B cell (primary cell): ENCODE measurements at regions of chr2 and their contacts with region 1.

Region 1: DNA sequence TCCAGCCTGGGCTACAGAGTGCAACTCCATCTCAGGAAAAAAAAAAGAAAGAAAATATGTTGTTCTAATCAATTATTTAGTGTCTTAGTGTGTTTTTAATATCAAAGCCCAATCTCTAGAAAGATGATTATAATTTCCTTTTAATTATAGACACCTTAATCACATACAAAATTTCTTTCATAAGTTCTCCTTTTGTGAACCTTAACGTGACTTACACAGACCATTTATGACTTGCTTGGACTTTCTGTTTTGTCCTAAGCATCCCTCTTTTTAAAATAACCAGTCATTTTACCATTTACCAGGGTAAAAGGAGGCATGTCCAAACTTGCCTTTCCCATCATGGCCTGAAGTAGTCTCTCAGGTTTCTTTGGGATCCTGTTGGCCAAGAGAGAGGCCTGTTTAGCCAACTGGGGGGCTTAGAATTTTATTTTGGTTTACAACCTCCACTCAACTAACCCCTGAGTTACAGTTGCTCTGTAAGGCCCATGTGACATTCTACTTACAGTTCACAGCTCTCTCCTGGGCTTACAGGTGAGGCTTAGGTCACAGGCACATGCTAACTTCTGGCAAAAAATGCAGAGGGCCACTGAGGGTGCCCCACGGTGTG is 23.9 kb upstream of the GPR155 start:
- DNase-seq: no peak
- ATAC-seq: no peak
- H3K4me3 ChIP-seq: no peak overlapping the region
- H3K4me3 Mint-ChIP-seq: no peak overlapping the region
- H3K27ac ChIP-seq: no peak overlapping the region
- H3K27ac Mint-ChIP-seq: no peak overlapping the region
- H3K4me1 ChIP-seq: no peaks in the 10 kb centered on the region
- H3K4me1 Mint-ChIP-seq: no peaks in the 10 kb centered on the region
- H3K27me3 ChIP-seq: no peaks in the 10 kb centered on the region
- H3K27me3 Mint-ChIP-seq: no peaks in the 10 kb centered on the region
- CTCF ChIP-seq: no peak

Region 2: GRCh38 chr2:174522553-174522952 is 11.9 kb after region 1 on chr2:
- CTCF ChIA-PET with region 1: interaction called, 4 read pairs
- POLR2A ChIA-PET with region 1: interaction called, 6 read pairs
- intact Hi-C with region 1: loop called (anchors 2 kb)
- DNase-seq: peak; percentile 31
- ATAC-seq: peak; percentile 36
- H3K4me3 ChIP-seq: no peak overlapping the region
- H3K4me3 Mint-ChIP-seq: no peak overlapping the region
- H3K27ac ChIP-seq: no peak overlapping the region
- H3K27ac Mint-ChIP-seq: peak overlapping the region; percentile 23
- H3K4me1 ChIP-seq: peaks cover 3 to 6% of the 10 kb centered on the region in 2 donors
- H3K4me1 Mint-ChIP-seq: peaks cover 18% of the 10 kb centered on the region
- H3K27me3 ChIP-seq: peaks cover 0 to 2% (median 0%) of the 10 kb centered on the region in 4 experiments
- H3K27me3 Mint-ChIP-seq: peaks cover 6% of the 10 kb centered on the region
- CTCF ChIP-seq: no peak

Region 3: GRCh38 chr2:175734679-175735078 is 1224.0 kb after region 1 on chr2:
- CTCF ChIA-PET with region 1: no interaction called
- POLR2A ChIA-PET with region 1: no interaction called
- intact Hi-C with region 1: no loop called
- DNase-seq: no peak
- ATAC-seq: no peak
- H3K4me3 ChIP-seq: no peak overlapping the region
- H3K4me3 Mint-ChIP-seq: no peak overlapping the region
- H3K27ac ChIP-seq: no peak overlapping the region
- H3K27ac Mint-ChIP-seq: no peak overlapping the region
- H3K4me1 ChIP-seq: no peaks in the 10 kb centered on the region
- H3K4me1 Mint-ChIP-seq: no peaks in the 10 kb centered on the region
- H3K27me3 ChIP-seq: no peaks in the 10 kb centered on the region
- H3K27me3 Mint-ChIP-seq: no peaks in the 10 kb centered on the region
- CTCF ChIP-seq: no peak